CD8-positive, alpha-beta memory T cell (primary cell): ENCODE measurements at regions of chr9 and their contacts with region 1.

Region 1: DNA sequence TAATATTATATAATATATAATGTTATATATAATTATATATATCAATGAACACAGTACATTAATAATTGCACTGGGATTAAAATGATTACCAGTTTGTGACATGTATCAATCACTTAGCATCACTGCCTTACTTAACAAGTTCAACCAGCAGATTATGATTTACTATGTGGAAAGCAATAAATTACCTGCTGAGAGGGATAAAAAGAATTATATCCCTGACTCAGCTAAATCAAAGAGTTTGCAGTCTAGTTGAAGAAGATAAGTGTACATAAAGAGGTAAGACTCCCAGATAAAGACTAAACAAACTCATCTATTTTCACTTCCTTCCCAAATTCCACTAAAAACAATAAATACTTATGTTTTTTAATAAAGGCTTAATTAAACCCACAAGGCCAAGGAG is 11.2 kb downstream of the PLAA start:
- DNase-seq: no peak
- H3K4me3 ChIP-seq: no peak overlapping the region
- H3K4me3 Mint-ChIP-seq: no peak overlapping the region
- H3K27ac ChIP-seq: no peak overlapping the region
- H3K27ac Mint-ChIP-seq: no peak overlapping the region
- H3K4me1 ChIP-seq: peaks cover 7% of the 10 kb centered on the region
- H3K4me1 Mint-ChIP-seq: peaks cover 42 to 61% (median 60%) of the 10 kb centered on the region in 3 donors
- H3K27me3 ChIP-seq: no peaks in the 10 kb centered on the region
- H3K27me3 Mint-ChIP-seq: no peaks in the 10 kb centered on the region

Region 2: DNA sequence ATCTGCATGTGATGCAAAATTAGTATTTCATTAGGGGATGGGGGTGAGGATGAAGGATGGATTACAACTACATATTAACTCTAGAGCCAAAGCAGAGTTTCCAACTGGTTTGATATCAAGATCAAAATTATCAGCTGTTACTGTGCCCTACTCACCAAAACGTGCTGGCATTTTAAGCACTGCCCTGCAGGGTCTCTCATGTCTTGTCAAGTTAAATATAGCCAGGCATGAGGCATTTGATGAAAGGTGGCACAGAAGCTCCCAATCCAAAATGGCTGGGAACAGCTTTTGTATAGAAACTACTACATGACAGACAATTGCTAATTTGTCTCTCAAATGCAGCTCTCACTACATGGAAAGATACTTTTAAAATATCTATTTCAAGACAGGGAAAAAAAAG is 16.1 kb before region 1 on chr9:
- CTCF ChIA-PET with region 1: no interaction called
- POLR2A ChIA-PET with region 1: no interaction called
- DNase-seq: no peak
- H3K4me3 ChIP-seq: no peak overlapping the region
- H3K4me3 Mint-ChIP-seq: no peak overlapping the region
- H3K27ac ChIP-seq: no peak overlapping the region
- H3K27ac Mint-ChIP-seq: no peak overlapping the region
- H3K4me1 ChIP-seq: no peaks in the 10 kb centered on the region
- H3K4me1 Mint-ChIP-seq: no peaks in the 10 kb centered on the region
- H3K27me3 ChIP-seq: no peaks in the 10 kb centered on the region
- H3K27me3 Mint-ChIP-seq: no peaks in the 10 kb centered on the region

Region 3: GRCh38 chr9:26955921-26956859 is 20.3 kb after region 1 on chr9 and contains the start of gene IFT74:
- CTCF ChIA-PET with region 1: no interaction called
- POLR2A ChIA-PET with region 1: interaction called, 14 read pairs
- DNase-seq: peak; percentile 88 to 97 (median 93)
- H3K4me3 ChIP-seq: peak within 1 kb of the TSS; percentile 83
- H3K4me3 Mint-ChIP-seq: peak within 1 kb of the TSS; percentile 89 to 97 (median 93)
- H3K27ac ChIP-seq: peak within 1 kb of the TSS; percentile 71
- H3K27ac Mint-ChIP-seq: peak within 1 kb of the TSS; percentile 91 to 97 (median 96)
- H3K4me1 ChIP-seq: peaks cover 16% of the 10 kb centered on the region
- H3K4me1 Mint-ChIP-seq: peaks cover 25 to 36% (median 35%) of the 10 kb centered on the region in 3 donors
- H3K27me3 ChIP-seq: no peaks in the 10 kb centered on the region
- H3K27me3 Mint-ChIP-seq: peaks cover 0 to 2% of the 10 kb centered on the region in 2 donors
- total RNA-seq, gene IFT74: 10.4 TPM